Activated CD4-positive, alpha-beta T cell treated with anti-CD3 and anti-CD28 coated beads, Interleukin-2, amount 10 ng/mL, durations not matched to agents 24 days and 14 days (primary cell): ENCODE measurements at regions of chr9 and their contacts with region 1.

Region 1: DNA sequence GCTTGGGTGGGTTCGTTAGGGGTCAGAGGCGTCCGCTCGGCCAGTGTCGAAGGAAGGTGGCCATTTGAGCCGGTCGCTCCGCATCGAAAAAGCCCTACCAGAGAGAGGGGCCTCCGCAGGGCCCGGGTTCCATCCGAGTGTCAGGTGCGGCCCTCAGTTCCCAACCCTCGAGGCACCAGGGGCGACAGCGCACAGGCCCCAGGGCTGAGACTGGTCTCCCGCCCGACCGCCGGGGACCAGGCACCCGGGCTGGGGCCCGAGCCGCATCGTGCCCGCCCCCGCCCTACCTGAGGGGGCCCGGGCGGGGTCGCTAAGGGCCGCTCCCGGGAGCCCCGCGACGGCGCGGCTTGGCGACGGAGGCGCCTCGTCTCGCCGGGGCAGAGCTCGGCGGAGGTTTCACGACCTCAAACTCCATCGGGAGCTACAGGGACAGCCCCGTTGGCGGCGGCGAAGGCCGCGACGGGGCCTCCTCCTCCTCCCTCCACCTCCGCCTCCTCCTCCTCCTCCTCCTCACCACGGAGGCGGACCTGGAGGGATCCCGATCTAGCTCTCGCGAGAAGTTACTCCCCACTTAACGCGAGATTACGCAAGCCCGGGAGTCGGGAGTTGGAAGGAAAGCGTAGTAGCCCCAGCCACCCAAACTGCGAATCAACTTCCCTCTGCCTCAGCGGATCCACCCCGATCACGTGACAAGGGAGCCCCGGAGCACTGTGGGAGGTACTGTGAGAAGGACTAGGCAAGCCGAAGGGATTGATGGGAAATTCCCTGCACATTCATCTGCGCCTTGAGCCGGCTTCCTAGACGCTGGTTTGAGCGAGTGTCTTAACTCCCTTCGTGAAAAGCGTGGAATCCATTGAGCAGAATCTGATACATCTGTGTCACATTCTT is at the start of gene RC3H2:
- DNase-seq: peak; percentile 99
- H3K4me3 Mint-ChIP-seq: peak within 1 kb of the TSS; percentile 95
- H3K27ac Mint-ChIP-seq: peak within 1 kb of the TSS; percentile 96
- H3K4me1 Mint-ChIP-seq: peaks cover 19% of the 10 kb centered on the region
- H3K27me3 Mint-ChIP-seq: no peaks in the 10 kb centered on the region
- total RNA-seq, gene RC3H2: 39.7 and 40.2 TPM in 2 replicates

Region 2: GRCh38 chr9:122092611-122093506 is 812.2 kb before region 1 on chr9 and contains the start of gene TTLL11:
- intact Hi-C with region 1: loop called (anchors 1 kb)
- DNase-seq: peak; percentile 99
- H3K4me3 Mint-ChIP-seq: peak within 1 kb of the TSS; percentile 81
- H3K27ac Mint-ChIP-seq: peak within 1 kb of the TSS; percentile 82
- H3K4me1 Mint-ChIP-seq: peaks cover 34% of the 10 kb centered on the region
- H3K27me3 Mint-ChIP-seq: peaks cover 21% of the 10 kb centered on the region
- total RNA-seq, gene TTLL11: 2.4 and 2.8 TPM in 2 replicates

Region 3: GRCh38 chr9:122827761-122828093 is 77.3 kb before region 1 on chr9:
- intact Hi-C with region 1: loop called (anchors 1 kb)
- DNase-seq: no peak
- H3K4me3 Mint-ChIP-seq: peak overlapping the region; percentile 93
- H3K27ac Mint-ChIP-seq: peak overlapping the region; percentile 94
- H3K4me1 Mint-ChIP-seq: peaks cover 23% of the 10 kb centered on the region
- H3K27me3 Mint-ChIP-seq: no peaks in the 10 kb centered on the region

Region 4: GRCh38 chr9:122883125-122883524 is 21.9 kb before region 1 on chr9:
- intact Hi-C with region 1: no loop called
- DNase-seq: peak; percentile 33
- H3K4me3 Mint-ChIP-seq: no peak overlapping the region
- H3K27ac Mint-ChIP-seq: no peak overlapping the region
- H3K4me1 Mint-ChIP-seq: peaks cover 5% of the 10 kb centered on the region
- H3K27me3 Mint-ChIP-seq: no peaks in the 10 kb centered on the region

Region 5: DNA sequence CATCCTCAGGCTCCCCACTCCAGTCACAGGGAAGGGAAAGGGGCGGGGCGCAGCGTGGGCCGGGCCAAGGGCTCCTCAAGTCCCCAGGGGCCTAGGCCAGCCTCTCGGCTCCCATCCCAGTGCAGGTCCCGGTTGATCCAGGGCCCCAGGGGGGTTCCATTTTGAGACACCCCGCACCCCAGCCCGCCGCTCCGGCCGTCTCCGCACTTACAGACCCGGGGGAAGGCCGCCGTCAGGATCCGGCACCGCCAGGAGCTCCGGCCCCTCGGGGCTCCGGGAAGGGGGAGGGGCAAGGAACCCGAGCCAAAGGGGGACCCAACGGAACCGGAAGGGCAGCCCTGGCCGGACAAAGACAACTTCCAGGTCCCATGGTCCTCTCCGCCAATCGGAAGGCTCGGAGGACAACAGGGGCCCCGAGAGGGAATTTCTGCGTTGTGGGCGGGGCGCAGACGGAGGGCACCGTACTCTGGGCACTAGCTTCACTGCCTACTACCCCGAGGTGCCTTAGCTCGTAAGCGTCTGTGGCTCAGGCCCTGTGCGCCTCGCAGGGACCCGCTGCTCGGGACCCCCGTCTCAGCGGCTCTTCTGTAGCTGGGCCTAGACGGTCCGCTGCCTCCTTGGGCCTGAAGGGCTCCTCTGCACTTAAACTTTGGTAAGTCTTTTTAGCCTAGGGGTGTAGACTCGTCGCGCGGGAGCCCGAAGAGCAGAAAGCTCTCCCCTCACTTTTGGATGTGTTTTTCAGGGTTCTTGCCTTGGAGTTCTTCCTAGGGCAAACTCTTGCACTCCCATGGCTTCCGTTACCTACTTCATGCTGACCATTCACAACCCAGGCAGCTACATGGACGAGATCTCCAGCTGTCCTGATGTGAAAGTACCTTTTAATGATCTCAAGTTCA is 26.4 kb after region 1 on chr9 and contains the start of gene ZBTB26:
- intact Hi-C with region 1: loop called (anchors 1 kb)
- DNase-seq: peak; percentile 96
- H3K4me3 Mint-ChIP-seq: no peak within 1 kb of the TSS
- H3K27ac Mint-ChIP-seq: peak within 1 kb of the TSS; percentile 91
- H3K4me1 Mint-ChIP-seq: peaks cover 11% of the 10 kb centered on the region
- H3K27me3 Mint-ChIP-seq: no peaks in the 10 kb centered on the region
- total RNA-seq, gene ZBTB26: 8.4 and 8.9 TPM in 2 replicates

Region 6: DNA sequence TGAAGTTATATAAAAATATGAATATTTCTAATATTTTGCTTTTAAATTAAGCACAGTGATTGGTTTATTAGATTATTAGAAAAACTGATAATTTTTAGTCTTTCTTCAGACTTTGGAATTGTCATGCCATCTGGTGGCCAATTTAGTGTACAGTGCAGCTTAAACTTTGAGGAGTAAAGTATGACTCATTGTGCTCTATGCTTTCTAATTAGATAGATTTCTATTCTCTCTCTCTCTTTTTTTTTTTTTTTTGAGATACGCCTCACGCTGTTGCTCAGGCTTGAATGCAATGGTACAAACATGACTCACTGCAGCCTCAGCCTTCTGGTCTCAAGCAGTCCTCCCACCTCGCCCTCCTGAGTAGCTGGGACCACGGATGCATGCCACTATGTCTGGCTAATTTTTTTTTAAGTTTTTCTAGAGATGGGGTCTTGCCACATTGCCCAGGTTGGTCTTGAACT is 86.3 kb after region 1 on chr9:
- intact Hi-C with region 1: loop called (anchors 1 kb)
- DNase-seq: peak; percentile 71
- H3K4me3 Mint-ChIP-seq: no peak overlapping the region
- H3K27ac Mint-ChIP-seq: peak overlapping the region; percentile 17
- H3K4me1 Mint-ChIP-seq: peaks cover 3% of the 10 kb centered on the region
- H3K27me3 Mint-ChIP-seq: no peaks in the 10 kb centered on the region

Region 7: GRCh38 chr9:123268240-123268949 is 363.3 kb after region 1 on chr9 and contains the start of gene STRBP:
- intact Hi-C with region 1: loop called (anchors 1 kb)
- DNase-seq: peak; percentile 98
- H3K4me3 Mint-ChIP-seq: peak within 1 kb of the TSS; percentile 78
- H3K27ac Mint-ChIP-seq: peak within 1 kb of the TSS; percentile 50
- H3K4me1 Mint-ChIP-seq: peaks cover 29% of the 10 kb centered on the region
- H3K27me3 Mint-ChIP-seq: peaks cover 13% of the 10 kb centered on the region
- total RNA-seq, gene STRBP: 25.1 and 25.8 TPM in 2 replicates